ENCODE measurements at regions of chr4 and their contacts with region 1.

Region 1: GRCh38 chr4:20944451-20944850 is 244.2 kb downstream of the PACRGL start:
- DNase-seq: no peak
- H3K4me3 ChIP-seq: no peak overlapping the region
- H3K27ac ChIP-seq: no peak overlapping the region
- H3K4me1 ChIP-seq: no peaks in the 10 kb centered on the region
- H3K27me3 ChIP-seq: no peaks in the 10 kb centered on the region
- CTCF ChIP-seq: no peak

Region 2: DNA sequence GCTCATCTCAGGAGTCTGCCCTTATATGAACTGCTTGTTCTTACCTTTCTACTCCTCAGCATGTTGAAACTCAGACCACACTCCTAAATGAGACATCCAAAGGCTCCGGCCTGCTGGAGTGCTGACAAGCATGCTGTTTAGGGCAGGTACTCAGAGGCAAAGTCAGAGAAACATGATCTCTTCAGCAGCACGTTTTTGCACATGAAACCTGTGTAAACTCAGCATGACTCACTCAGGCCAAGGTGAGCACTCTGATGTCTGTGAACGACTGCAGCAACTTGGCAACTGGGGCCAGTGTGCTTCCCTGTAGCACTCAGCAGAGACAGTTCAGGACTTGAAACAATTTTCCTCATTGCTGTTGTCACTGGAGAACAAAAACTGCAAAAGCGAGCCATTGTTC is 134.6 kb before region 1 on chr4:
- CTCF ChIA-PET with region 1: interaction called, 13 read pairs
- dilution Hi-C with region 1: no loop called
- in situ Hi-C with region 1: no loop called
- intact Hi-C with region 1: no loop called
- DNase-seq: peak; percentile 96
- H3K4me3 ChIP-seq: no peak overlapping the region
- H3K27ac ChIP-seq: no peak overlapping the region
- H3K4me1 ChIP-seq: peaks cover 9% of the 10 kb centered on the region
- H3K27me3 ChIP-seq: no peaks in the 10 kb centered on the region
- CTCF ChIP-seq: no peak

Region 3: DNA sequence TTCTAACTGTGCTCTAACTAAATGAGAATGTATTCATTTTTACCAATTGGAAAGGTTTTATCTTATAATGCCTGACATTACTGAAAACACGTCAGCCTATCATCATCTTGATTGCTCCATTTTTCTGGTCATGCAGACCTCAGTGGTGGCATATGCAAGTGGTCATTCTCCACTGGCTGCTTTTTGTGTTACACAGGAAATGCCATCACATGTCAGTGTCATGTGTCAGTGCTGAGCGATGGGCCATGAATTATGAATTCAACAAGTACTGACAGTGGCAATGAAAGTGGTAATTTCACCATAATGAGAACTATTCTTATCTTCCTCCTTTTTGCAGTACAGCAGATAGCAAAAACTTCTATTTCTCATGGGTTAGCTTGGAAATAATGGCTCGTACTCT is 53.7 kb before region 1 on chr4:
- CTCF ChIA-PET with region 1: no interaction called
- dilution Hi-C with region 1: no loop called
- in situ Hi-C with region 1: no loop called
- intact Hi-C with region 1: no loop called
- DNase-seq: peak; percentile 6
- H3K4me3 ChIP-seq: no peak overlapping the region
- H3K27ac ChIP-seq: no peak overlapping the region
- H3K4me1 ChIP-seq: no peaks in the 10 kb centered on the region
- H3K27me3 ChIP-seq: no peaks in the 10 kb centered on the region
- CTCF ChIP-seq: no peak